Prostate gland (tissue), 2 donors: ENCODE measurements at regions of chr4 and their contacts with region 1.

Region 1: DNA sequence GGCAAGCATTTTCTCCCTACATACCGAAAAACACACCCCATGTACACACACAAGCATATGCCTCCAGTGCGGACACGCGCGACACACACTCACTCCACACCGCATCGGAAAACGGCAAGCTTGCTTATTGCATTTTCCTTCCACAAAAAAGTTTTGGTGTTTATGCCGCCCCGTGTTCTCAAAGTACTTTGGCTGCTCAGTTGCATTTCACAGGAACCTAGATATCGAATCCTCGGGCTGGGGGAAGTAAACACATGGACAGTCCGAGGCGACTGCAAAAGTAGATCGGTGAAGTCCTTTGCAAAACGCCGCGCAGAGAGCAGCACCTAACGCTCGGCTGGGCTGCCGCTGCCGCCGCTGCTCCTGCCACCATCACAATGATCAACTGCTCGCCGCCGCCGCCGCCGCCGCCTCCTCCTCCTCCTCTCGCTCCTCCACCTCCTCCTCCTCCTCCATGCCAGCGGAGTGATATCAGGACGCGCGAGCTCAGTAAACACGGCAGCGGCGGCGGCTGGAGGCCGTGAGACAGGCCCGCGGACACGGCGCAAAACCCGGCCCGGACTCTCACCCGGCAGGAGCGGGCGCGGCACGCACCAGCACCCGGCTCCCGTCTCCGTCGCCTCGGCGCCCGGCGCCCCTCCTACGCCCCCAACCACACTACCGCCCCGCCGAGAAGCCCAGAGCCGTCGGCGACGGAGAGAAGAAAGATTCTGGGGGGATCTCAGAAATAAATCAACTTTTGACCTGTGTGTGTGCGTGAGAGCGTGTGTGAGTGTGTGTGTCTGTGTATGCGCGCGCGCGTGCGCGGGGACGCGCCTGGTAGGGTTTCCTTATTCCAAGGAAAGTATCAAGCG is at the start of gene MAML3:
- DNase-seq: peak; percentile 95
- H3K4me3 ChIP-seq: peak within 1 kb of the TSS; percentile 79 to 80
- H3K27ac ChIP-seq: peak within 1 kb of the TSS; percentile 97 to 99
- H3K4me1 ChIP-seq: peaks cover 6% of the 10 kb centered on the region
- H3K27me3 ChIP-seq: no peaks in the 10 kb centered on the region
- CTCF ChIP-seq: peak in 1 of 4 experiments; percentile 27
- POLR2A ChIP-seq: peak; percentile 80
- total RNA-seq, gene MAML3: 15.0 to 30.6 TPM

Region 2: GRCh38 chr4:138707746-138708677 is 1445.9 kb before region 1 on chr4:
- intact Hi-C with region 1: no loop called
- DNase-seq: no peak
- H3K4me3 ChIP-seq: no peak overlapping the region
- H3K27ac ChIP-seq: no peak overlapping the region
- H3K4me1 ChIP-seq: no peaks in the 10 kb centered on the region
- H3K27me3 ChIP-seq: no peaks in the 10 kb centered on the region
- CTCF ChIP-seq: no peak
- POLR2A ChIP-seq: no peak

Region 3: DNA sequence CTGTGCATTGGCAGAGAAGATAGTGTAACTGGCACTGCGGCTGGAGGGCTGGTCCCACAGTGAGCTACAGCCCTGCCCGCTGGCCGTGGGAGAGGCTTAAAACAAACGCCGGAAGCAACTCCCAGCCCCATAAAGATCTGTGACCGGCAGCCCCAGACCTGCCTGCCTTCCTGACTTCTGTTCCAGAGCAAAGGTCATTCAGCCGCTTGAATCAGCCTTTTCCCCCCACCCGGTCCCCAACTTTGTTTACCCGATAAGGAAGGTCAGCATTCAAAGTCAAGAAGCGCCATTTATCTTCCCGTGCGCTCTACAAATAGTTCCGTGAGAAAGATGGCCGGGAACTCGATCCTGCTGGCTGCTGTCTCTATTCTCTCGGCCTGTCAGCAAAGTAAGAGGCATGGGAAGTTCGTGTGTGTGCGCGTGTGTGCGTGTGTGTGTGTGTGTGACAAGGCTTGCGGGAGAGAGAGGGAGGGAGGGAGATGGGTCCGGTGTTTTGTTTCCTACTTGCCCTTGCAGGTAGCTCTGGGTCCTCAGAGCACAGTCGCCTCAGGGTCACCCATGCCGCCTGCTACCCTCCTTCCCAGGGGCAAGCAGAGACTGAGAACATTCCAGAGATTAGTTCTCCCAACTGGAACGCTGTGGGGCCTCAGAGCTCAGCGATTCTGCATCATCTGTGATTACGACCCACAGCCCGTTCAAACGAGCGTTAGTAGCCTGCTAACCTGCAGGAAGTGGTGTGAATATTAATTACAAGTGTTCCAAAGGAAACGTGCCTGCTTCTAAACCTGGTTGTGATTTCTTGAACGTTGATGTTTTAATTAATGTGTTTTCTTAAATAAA is 488.0 kb before region 1 on chr4 and contains the start of gene MGST2:
- intact Hi-C with region 1: loop called (anchors 5 kb)
- DNase-seq: peak; percentile 83
- H3K4me3 ChIP-seq: peak within 1 kb of the TSS; percentile 47 to 53
- H3K27ac ChIP-seq: peak within 1 kb of the TSS; percentile 87 to 91
- H3K4me1 ChIP-seq: peaks cover 7% of the 10 kb centered on the region
- H3K27me3 ChIP-seq: no peaks in the 10 kb centered on the region
- CTCF ChIP-seq: no peak
- POLR2A ChIP-seq: peak; percentile 24
- total RNA-seq, gene MGST2: 101 to 135 TPM

Region 4: DNA sequence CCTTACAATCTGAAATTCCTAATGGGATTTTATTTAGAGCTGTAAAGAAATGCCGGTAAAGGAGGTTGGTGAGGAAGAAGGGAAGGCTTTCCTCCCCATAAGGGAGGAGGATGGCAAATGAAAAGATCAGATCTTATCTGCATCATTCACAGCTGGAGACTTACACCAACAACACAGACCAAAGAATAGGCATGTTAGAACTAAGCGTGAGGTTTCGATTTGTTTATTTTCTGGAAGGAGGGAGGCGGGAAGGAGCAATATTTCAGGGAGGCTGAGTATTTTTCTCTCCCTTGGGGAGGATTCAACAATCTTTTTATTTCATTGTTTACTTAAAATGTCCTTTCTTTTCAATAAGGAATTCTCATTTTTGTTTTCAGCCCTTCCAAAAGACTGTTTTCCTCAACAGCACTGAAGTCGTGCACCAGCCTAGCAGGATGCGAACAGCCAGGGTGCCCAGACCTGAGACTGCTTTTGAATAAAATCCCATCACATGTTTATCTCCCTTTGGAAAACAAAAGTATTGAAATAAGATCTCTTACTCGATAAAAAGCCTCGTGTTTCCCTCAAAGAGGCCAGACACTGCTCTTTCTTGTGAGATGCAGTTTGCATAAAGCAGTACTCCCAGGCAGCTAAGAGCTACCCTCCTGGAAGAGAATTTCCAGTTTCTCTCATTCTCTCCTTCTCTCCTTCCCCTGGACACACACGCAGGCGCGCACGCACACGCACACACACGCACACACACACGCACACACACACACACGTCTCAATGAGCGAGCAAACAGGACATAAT is 252.2 kb before region 1 on chr4:
- intact Hi-C with region 1: loop called (anchors 5 kb)
- DNase-seq: peak; percentile 23
- H3K4me3 ChIP-seq: peak overlapping the region; percentile 8 to 26
- H3K27ac ChIP-seq: peak overlapping the region; percentile 60 to 79
- H3K4me1 ChIP-seq: no peaks in the 10 kb centered on the region
- H3K27me3 ChIP-seq: no peaks in the 10 kb centered on the region
- CTCF ChIP-seq: no peak
- POLR2A ChIP-seq: no peak

Region 5: GRCh38 chr4:140012688-140013486 is 141.1 kb before region 1 on chr4:
- intact Hi-C with region 1: loop called (anchors 5 kb)
- DNase-seq: peak; percentile 71
- H3K4me3 ChIP-seq: no peak overlapping the region
- H3K27ac ChIP-seq: peak overlapping the region in 1 of 2 donors; percentile 22
- H3K4me1 ChIP-seq: no peaks in the 10 kb centered on the region
- H3K27me3 ChIP-seq: no peaks in the 10 kb centered on the region
- CTCF ChIP-seq: peak in 3 of 4 experiments; percentile 54 to 78 (median 68)
- POLR2A ChIP-seq: no peak

Region 6: GRCh38 chr4:140095694-140096482 is 58.1 kb before region 1 on chr4:
- intact Hi-C with region 1: loop called (anchors 5 kb)
- DNase-seq: no peak
- H3K4me3 ChIP-seq: no peak overlapping the region
- H3K27ac ChIP-seq: peak overlapping the region; percentile 70 to 77
- H3K4me1 ChIP-seq: peaks cover 21% of the 10 kb centered on the region
- H3K27me3 ChIP-seq: no peaks in the 10 kb centered on the region
- CTCF ChIP-seq: no peak
- POLR2A ChIP-seq: no peak

Region 7: GRCh38 chr4:140243278-140243753 is 89.4 kb after region 1 on chr4:
- intact Hi-C with region 1: no loop called
- DNase-seq: peak; percentile 75
- H3K4me3 ChIP-seq: peak overlapping the region in 1 of 2 donors; percentile 1
- H3K27ac ChIP-seq: peak overlapping the region; percentile 60 to 61
- H3K4me1 ChIP-seq: peaks cover 12% of the 10 kb centered on the region
- H3K27me3 ChIP-seq: no peaks in the 10 kb centered on the region
- CTCF ChIP-seq: no peak
- POLR2A ChIP-seq: peak; percentile 33

Region 8: DNA sequence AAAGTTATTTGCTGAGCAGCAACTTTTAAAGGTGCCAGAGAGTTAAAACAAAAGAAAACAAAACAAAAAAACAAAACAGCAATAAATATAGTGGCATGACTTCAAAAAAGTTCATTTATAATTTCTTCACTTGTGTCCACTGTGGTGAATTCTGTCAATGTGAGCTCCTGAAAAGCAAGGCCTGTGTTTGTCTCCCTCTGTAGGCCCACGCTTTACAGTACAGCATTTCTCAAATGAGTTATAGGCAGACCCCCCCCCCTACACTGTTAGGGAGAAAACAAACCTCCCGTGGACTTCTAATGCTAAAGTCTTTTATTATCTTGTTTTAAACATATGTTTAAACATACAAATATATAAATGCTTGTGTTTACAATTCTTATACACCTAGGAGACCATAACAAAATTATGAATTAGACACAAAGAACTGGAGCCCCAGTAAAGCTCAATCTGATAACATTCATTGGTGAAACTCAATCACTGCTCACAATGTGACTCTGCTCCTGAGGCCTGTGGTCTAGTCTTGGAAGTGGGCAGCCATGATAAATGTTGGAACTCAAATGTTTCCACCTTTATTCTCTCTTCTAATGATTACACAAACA is 172.5 kb after region 1 on chr4:
- intact Hi-C with region 1: loop called (anchors 10 kb)
- DNase-seq: no peak
- H3K4me3 ChIP-seq: no peak overlapping the region
- H3K27ac ChIP-seq: no peak overlapping the region
- H3K4me1 ChIP-seq: no peaks in the 10 kb centered on the region
- H3K27me3 ChIP-seq: no peaks in the 10 kb centered on the region
- CTCF ChIP-seq: peak; percentile 24 to 78 (median 60)
- POLR2A ChIP-seq: no peak